Activated CD8-positive, alpha-beta memory T cell treated with anti-CD3 and anti-CD28 coated beads, Interleukin-2, amount 10 ng/mL, durations not matched to agents 7 days and 5 days (primary cell): ENCODE measurements at regions of chr11 and their contacts with region 1.

Region 1: GRCh38 chr11:119030329-119031049 is at the start of gene SLC37A4:
- DNase-seq: peak; percentile 99
- ATAC-seq: peak; percentile 97
- H3K4me3 Mint-ChIP-seq: peak within 1 kb of the TSS; percentile 71
- H3K27ac Mint-ChIP-seq: peak within 1 kb of the TSS; percentile 83
- H3K4me1 Mint-ChIP-seq: peaks cover 21% of the 10 kb centered on the region
- H3K27me3 Mint-ChIP-seq: no peaks in the 10 kb centered on the region
- total RNA-seq, gene SLC37A4: 26.0 to 26.5 TPM

Region 2: GRCh38 chr11:118997627-118998387 is 32.7 kb before region 1 on chr11 and contains the start of gene CENATAC:
- CTCF ChIA-PET with region 1: interaction called, 12 read pairs
- DNase-seq: peak; percentile 98
- ATAC-seq: peak; percentile 97
- H3K4me3 Mint-ChIP-seq: peak within 1 kb of the TSS; percentile 97
- H3K27ac Mint-ChIP-seq: peak within 1 kb of the TSS; percentile 97
- H3K4me1 Mint-ChIP-seq: peaks cover 33% of the 10 kb centered on the region
- H3K27me3 Mint-ChIP-seq: no peaks in the 10 kb centered on the region
- total RNA-seq, gene CENATAC: 43.4 to 47.1 TPM

Region 3: GRCh38 chr11:119018074-119018938 is 12.2 kb before region 1 on chr11 and contains the starts of genes RPS25 and TRAPPC4:
- CTCF ChIA-PET with region 1: interaction called, 11 read pairs
- DNase-seq: peak; percentile 98
- ATAC-seq: peak; percentile 91
- H3K4me3 Mint-ChIP-seq: peak within 1 kb of the TSS; percentile 94
- H3K27ac Mint-ChIP-seq: peak within 1 kb of the TSS; percentile 99
- H3K4me1 Mint-ChIP-seq: peaks cover 56% of the 10 kb centered on the region
- H3K27me3 Mint-ChIP-seq: no peaks in the 10 kb centered on the region
- total RNA-seq, gene RPS25: 945 to 1,070 TPM
- total RNA-seq, gene TRAPPC4: 73.9 to 91.5 TPM

Region 4: GRCh38 chr11:119047205-119047604 is 16.7 kb after region 1 on chr11:
- CTCF ChIA-PET with region 1: interaction called, 10 read pairs
- DNase-seq: no peak
- ATAC-seq: no peak
- H3K4me3 Mint-ChIP-seq: no peak overlapping the region
- H3K27ac Mint-ChIP-seq: no peak overlapping the region
- H3K4me1 Mint-ChIP-seq: peaks cover 18% of the 10 kb centered on the region
- H3K27me3 Mint-ChIP-seq: no peaks in the 10 kb centered on the region